Activated B cell treated with CpG ODN at 0.5 μM for 24 hours (primary cell): ENCODE measurements at regions of chr22 and their contacts with region 1.

Region 1: GRCh38 chr22:42614312-42615091 is at the start of gene POLDIP3:
- DNase-seq: peak; percentile 97
- ATAC-seq: peak; percentile 60
- H3K4me3 Mint-ChIP-seq: peak within 1 kb of the TSS; percentile 97
- H3K27ac Mint-ChIP-seq: peak within 1 kb of the TSS; percentile 100
- H3K4me1 Mint-ChIP-seq: peaks cover 56% of the 10 kb centered on the region
- H3K27me3 Mint-ChIP-seq: no peaks in the 10 kb centered on the region
- CTCF ChIP-seq: no peak
- total RNA-seq, gene POLDIP3: 77.1 and 77.5 TPM in 2 replicates

Region 2: GRCh38 chr22:42533638-42533977 is 80.9 kb before region 1 on chr22:
- CTCF ChIA-PET with region 1: no interaction called
- POLR2A ChIA-PET with region 1: interaction called, 18 read pairs
- intact Hi-C with region 1: loop called (anchors 1 kb)
- DNase-seq: no peak
- ATAC-seq: no peak
- H3K4me3 Mint-ChIP-seq: peak overlapping the region; percentile 81
- H3K27ac Mint-ChIP-seq: peak overlapping the region; percentile 94
- H3K4me1 Mint-ChIP-seq: peaks cover 66% of the 10 kb centered on the region
- H3K27me3 Mint-ChIP-seq: no peaks in the 10 kb centered on the region
- CTCF ChIP-seq: no peak

Region 3: DNA sequence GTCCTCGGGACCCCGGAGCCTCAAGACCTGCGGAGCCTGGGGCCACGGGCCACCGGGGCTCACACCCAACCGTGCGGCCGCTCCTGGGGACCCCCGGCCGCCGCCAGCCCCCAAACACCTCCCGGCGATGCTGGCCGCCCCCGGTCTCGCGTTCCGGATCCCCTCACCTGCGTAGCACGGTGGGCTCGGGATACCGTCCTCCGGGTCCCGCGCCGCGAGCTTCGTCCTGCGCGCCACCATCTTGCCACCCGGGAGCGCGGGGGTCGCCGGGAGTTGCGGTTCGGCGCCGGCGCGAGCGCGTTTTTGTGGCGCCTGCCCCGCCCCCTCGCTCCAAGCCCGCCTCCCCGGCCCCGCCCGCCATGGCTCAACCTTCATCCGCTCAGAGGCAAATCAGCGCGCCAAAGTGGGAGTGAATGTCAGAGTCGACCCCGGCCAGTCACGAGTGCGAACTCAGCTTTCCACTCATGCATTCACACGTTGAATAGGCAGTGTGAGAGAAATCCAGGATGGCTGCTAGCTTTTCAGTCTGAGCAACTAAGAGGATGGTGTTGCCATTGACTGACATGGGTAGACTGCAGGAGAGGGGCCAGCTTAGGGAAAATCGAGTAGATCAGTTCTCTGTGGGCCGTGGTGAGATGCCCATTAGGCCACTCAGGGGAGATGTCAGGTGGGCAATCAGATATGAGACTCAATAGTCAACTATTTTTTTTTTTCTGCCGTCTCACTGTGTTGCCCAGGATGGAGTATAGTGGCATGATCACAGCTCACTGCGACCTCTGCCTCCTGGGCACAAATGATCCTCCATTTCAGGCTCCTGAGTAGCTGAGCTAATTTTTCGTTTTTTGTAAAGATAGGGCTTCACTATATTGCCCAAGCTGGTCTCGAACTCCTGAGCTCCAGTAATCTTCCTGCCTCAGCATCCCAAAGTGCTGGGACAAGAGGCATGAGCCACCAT is 32.5 kb before region 1 on chr22:
- CTCF ChIA-PET with region 1: no interaction called
- POLR2A ChIA-PET with region 1: interaction called, 37 read pairs
- intact Hi-C with region 1: loop called (anchors 2 kb)
- DNase-seq: peak; percentile 79
- ATAC-seq: peak; percentile 87
- H3K4me3 Mint-ChIP-seq: peak overlapping the region; percentile 95
- H3K27ac Mint-ChIP-seq: peak overlapping the region; percentile 75
- H3K4me1 Mint-ChIP-seq: peaks cover 14% of the 10 kb centered on the region
- H3K27me3 Mint-ChIP-seq: no peaks in the 10 kb centered on the region
- CTCF ChIP-seq: no peak

Region 4: GRCh38 chr22:42655693-42656092 is 41.2 kb after region 1 on chr22:
- CTCF ChIA-PET with region 1: no interaction called
- POLR2A ChIA-PET with region 1: interaction called, 96 read pairs
- intact Hi-C with region 1: no loop called
- DNase-seq: peak; percentile 54
- ATAC-seq: peak; percentile 93
- H3K4me3 Mint-ChIP-seq: peak overlapping the region; percentile 65
- H3K27ac Mint-ChIP-seq: peak overlapping the region; percentile 81
- H3K4me1 Mint-ChIP-seq: peaks cover 46% of the 10 kb centered on the region
- H3K27me3 Mint-ChIP-seq: no peaks in the 10 kb centered on the region
- CTCF ChIP-seq: no peak

Region 5: DNA sequence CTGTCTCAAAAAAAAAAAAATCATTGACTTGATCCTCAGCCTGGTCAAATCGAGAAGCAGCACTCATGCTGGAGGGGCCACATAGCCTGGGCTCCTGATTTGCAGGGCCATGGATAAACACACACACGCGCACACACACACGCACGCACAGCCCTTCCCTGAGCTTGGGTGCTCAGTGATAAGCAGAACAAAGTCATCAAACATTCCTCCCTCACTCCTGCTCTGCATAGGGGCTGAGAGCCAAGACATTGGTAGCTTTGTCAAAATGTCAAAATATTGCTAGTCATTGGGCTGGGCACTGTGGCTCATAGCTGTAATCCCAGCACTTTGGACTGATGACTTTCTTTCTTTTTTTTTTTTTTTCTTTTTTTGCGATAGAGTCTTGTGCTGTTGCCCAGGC is 140.2 kb after region 1 on chr22:
- CTCF ChIA-PET with region 1: no interaction called
- POLR2A ChIA-PET with region 1: interaction called, 10 read pairs
- intact Hi-C with region 1: no loop called
- DNase-seq: no peak
- ATAC-seq: no peak
- H3K4me3 Mint-ChIP-seq: no peak overlapping the region
- H3K27ac Mint-ChIP-seq: peak overlapping the region; percentile 30
- H3K4me1 Mint-ChIP-seq: peaks cover 29% of the 10 kb centered on the region
- H3K27me3 Mint-ChIP-seq: peaks cover 1% of the 10 kb centered on the region
- CTCF ChIP-seq: no peak

Region 6: GRCh38 chr22:42856865-42857704 is 242.6 kb after region 1 on chr22 and contains the start of gene ARFGAP3:
- CTCF ChIA-PET with region 1: no interaction called
- POLR2A ChIA-PET with region 1: interaction called, 40 read pairs
- intact Hi-C with region 1: loop called (anchors 1 kb)
- DNase-seq: peak; percentile 99
- ATAC-seq: peak; percentile 93
- H3K4me3 Mint-ChIP-seq: peak within 1 kb of the TSS; percentile 86
- H3K27ac Mint-ChIP-seq: peak within 1 kb of the TSS; percentile 80
- H3K4me1 Mint-ChIP-seq: peaks cover 35% of the 10 kb centered on the region
- H3K27me3 Mint-ChIP-seq: no peaks in the 10 kb centered on the region
- CTCF ChIP-seq: no peak
- total RNA-seq, gene ARFGAP3: 35.2 and 37.3 TPM in 2 replicates

Region 7: GRCh38 chr22:43014869-43015676 is 400.6 kb after region 1 on chr22 and contains the start of gene PACSIN2:
- CTCF ChIA-PET with region 1: no interaction called
- POLR2A ChIA-PET with region 1: interaction called, 19 read pairs
- intact Hi-C with region 1: loop called (anchors 2 kb)
- DNase-seq: peak; percentile 97
- ATAC-seq: peak; percentile 98
- H3K4me3 Mint-ChIP-seq: peak within 1 kb of the TSS; percentile 95
- H3K27ac Mint-ChIP-seq: peak within 1 kb of the TSS; percentile 89
- H3K4me1 Mint-ChIP-seq: peaks cover 31% of the 10 kb centered on the region
- H3K27me3 Mint-ChIP-seq: no peaks in the 10 kb centered on the region
- CTCF ChIP-seq: no peak
- total RNA-seq, gene PACSIN2: 47.5 and 48.9 TPM in 2 replicates